Activated naive CD4-positive, alpha-beta T cell treated with anti-CD3 and anti-CD28 coated beads, Interleukin-2, amount 10 ng/mL, durations not matched to agents 7 days and 5 days (primary cell): ENCODE measurements at regions of chr1 and their contacts with region 1.

Region 1: DNA sequence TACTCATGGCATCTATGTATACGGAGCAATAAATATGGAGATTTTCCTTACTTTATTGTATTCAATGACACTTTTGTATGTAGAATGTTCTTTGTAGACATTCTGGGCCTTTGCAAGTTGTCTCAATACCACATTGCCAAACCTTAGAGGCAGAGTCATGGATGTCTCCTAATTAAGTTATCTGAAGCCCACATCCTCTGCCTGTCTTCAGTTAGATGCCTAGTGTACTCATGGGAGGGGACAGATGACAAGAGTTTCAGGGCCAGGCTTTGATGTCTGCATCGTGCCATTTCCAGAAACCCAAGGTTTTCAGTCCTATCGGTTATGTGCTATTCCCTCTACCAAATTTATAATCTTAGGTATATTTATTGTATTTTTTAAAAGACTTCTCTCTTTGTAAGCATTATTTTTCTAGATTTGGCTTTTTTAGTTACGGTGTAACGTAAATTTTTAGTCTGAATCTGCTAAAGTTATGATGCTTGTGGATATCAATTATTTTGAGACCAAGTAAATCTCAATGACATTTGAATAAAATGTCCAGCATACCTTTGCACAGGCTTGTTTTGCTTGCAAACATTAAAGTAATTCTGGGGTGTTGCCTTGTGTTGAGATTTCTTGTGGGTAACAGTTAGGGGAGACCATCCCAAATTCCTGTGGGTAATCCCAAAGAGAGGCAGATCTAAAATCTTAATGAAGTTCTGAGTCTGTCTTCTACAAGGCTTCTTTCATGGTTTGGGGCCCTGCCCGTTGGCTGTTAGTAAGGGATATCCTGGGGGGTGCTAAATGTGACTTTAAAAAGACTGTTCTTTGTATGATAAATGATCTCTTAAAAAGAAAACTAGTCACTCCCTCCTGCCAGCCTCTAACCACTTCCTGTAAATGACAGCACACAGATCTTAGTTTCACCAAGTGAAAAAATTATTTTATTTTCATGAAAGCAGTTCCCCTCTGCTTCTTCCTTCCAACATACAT is 8.0 kb upstream of the MACF1 start:
- DNase-seq: peak; percentile 79
- H3K4me3 Mint-ChIP-seq: peak overlapping the region; percentile 65
- H3K27ac Mint-ChIP-seq: peak overlapping the region; percentile 98
- H3K4me1 Mint-ChIP-seq: peaks cover 82% of the 10 kb centered on the region
- H3K27me3 Mint-ChIP-seq: no peaks in the 10 kb centered on the region

Region 2: DNA sequence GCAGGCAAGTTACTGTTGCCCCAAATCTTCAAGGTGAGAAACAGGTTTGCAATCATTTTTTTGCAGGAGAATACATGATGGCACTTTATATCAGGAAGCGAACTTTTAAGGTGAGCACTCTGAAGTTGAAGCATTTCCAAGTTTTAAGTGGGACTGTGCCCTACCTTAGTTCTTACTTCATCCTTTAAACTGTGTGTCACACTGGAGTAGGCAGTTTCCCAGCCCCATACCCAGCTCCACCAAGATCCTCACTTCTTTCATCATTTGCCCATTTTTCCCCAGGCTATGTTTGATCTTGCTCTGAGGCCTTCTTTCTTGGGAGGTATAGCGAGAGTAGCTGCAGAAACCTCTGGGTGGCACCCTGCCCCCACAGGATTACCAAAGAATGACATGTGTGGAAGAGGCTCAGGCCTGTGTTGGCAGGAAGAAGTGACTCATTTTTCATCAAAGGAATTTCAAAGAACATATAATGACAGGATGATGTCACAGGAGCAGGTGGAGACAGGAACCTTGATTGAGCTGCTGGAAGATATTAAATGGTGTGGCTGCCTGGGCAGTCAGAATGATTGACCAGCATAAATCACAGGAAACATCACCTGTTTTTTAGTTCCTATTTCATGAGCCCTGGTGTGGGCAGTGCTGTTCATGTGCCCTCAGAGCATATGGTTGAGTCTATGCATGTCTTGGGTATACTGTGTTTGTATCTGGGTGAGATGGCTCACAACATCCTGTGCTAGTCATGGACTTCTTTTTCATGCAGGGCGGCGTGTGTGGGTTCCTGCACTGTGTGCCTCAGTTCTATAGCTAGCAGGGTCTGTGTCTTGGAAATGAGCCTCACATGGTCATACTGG is 12.8 kb before region 1 on chr1:
- CTCF ChIA-PET with region 1: interaction called, 36 read pairs
- DNase-seq: peak; percentile 91
- H3K4me3 Mint-ChIP-seq: peak overlapping the region; percentile 11
- H3K27ac Mint-ChIP-seq: peak overlapping the region; percentile 91
- H3K4me1 Mint-ChIP-seq: peaks cover 49% of the 10 kb centered on the region
- H3K27me3 Mint-ChIP-seq: no peaks in the 10 kb centered on the region

Region 3: DNA sequence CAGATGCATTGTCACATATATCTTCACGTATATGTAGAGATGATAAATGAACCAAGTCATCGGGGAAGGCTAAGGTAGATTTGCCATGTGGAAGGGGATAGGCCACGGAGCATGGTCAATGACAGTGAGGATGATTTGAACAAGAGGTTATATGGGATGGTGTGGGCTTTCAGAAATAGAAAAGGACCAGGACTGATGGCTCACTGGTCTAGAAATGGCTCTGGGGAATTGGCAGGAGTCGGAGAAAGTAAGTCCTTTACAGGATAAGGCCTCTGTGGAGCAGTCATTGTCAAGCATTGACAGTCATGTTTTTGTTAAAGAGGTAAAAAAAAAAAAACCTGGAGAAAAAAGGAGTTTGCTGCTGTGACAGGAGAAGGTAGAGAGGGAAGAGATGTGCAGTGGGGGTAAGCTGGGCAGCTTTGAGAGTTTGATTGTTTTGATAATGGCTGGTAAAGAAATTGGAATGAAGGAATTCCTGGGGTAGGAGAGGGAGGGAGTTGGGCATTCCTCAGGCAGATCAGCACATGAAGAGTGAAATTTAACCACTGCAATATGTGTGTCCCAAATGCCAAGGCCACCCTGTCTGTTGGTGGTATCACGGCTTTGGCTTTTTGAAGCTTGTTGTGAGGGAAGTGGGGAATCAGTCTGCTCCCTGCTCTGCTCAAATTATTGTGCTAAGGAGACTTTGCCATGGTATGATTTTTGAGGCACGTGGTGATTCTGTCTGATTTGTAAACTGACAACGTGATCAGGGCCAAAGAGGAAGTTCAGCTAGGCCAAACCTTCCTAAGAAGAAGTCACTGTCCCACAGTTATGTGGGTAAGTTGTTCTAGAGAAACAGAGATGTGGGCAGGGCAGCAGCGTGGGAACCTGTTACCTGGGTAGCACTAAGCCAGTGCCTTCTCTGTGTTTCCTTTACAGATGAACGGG is 34.0 kb after region 1 on chr1:
- CTCF ChIA-PET with region 1: interaction called, 10 read pairs
- DNase-seq: peak; percentile 35
- H3K4me3 Mint-ChIP-seq: no peak overlapping the region
- H3K27ac Mint-ChIP-seq: peak overlapping the region; percentile 67
- H3K4me1 Mint-ChIP-seq: peaks cover 52% of the 10 kb centered on the region
- H3K27me3 Mint-ChIP-seq: no peaks in the 10 kb centered on the region

Region 4: GRCh38 chr1:39258146-39258924 is 61.8 kb after region 1 on chr1:
- CTCF ChIA-PET with region 1: interaction called, 208 read pairs
- DNase-seq: peak; percentile 74
- H3K4me3 Mint-ChIP-seq: no peak overlapping the region
- H3K27ac Mint-ChIP-seq: no peak overlapping the region
- H3K4me1 Mint-ChIP-seq: peaks cover 29% of the 10 kb centered on the region
- H3K27me3 Mint-ChIP-seq: no peaks in the 10 kb centered on the region

Region 5: GRCh38 chr1:39408641-39409054 is 212.1 kb after region 1 on chr1:
- CTCF ChIA-PET with region 1: interaction called, 17 read pairs
- DNase-seq: peak; percentile 90
- H3K4me3 Mint-ChIP-seq: peak overlapping the region; percentile 82
- H3K27ac Mint-ChIP-seq: no peak overlapping the region
- H3K4me1 Mint-ChIP-seq: peaks cover 52% of the 10 kb centered on the region
- H3K27me3 Mint-ChIP-seq: no peaks in the 10 kb centered on the region